ENCODE measurements at regions of chr4 and their contacts with region 1.

Region 1: DNA sequence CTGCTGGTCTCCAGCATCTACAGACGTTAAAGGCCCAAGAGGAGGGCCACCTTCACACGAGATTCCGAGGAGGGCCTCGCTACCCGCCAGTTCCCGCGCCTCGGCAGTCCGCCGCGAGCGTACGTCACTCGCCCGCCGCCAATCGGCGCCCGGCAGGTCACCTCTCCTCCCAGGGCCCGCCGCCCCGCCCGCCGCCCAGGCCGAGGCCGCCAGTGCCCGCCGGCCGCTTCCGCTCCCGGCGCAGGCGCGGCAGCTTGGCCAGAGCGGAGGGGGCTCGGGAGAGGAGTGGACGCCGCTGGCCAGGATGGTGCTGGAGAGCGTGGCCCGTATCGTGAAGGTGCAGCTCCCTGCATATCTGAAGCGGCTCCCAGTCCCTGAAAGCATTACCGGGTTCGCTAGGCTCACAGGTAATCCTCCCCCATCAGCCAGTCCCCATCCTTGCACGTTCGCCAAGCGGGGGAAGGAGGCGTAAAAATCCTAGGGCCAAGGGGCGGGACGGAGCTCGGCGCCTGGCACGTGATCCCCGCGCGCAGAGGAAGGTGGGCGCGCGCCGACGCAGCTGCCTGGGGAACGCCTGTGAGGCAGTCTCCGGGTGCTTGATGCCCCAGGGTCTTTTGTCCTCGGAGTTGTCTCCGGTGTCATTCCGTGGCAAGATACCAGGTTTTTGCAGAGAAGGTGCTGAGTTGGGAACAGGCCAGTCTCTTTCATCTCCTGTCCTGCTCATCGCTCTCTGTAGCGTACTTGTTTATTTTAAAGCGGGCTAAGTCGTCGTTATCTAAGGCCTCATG is at the start of gene CISD2:
- DNase-seq: peak; percentile 96
- ATAC-seq: peak; percentile 88
- H3K4me3 Mint-ChIP-seq: peak within 1 kb of the TSS; percentile 95
- H3K27ac Mint-ChIP-seq: peak within 1 kb of the TSS; percentile 99
- H3K4me1 Mint-ChIP-seq: peaks cover 53% of the 10 kb centered on the region
- H3K27me3 Mint-ChIP-seq: no peaks in the 10 kb centered on the region
- total RNA-seq, gene CISD2: 33.5 to 35.1 TPM

Region 2: DNA sequence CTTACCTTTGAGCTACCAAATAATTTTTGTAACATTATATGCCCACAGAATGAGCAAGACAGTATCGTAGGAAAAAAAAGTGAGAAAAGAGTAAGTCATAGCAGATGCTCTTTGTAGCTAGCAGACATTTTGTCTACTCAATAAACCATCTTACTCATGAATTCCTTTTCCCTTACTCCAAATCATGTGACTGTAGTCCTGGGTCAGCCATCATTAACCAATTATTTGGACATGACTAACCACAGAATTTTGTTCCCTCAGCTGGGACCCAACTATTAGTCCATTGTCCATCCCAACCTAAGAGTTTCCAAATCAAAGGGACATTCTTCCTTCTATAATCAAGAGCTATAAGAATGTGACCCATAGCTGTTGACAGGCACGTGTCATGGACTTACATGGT is 53.0 kb before region 1 on chr4:
- CTCF ChIA-PET with region 1: interaction called, 6 read pairs
- POLR2A ChIA-PET with region 1: interaction called, 13 read pairs
- intact Hi-C with region 1: no loop called
- DNase-seq: no peak
- ATAC-seq: peak; percentile 21
- H3K4me3 Mint-ChIP-seq: no peak overlapping the region
- H3K27ac Mint-ChIP-seq: peak overlapping the region; percentile 83
- H3K4me1 Mint-ChIP-seq: peaks cover 89% of the 10 kb centered on the region
- H3K27me3 Mint-ChIP-seq: no peaks in the 10 kb centered on the region

Region 3: DNA sequence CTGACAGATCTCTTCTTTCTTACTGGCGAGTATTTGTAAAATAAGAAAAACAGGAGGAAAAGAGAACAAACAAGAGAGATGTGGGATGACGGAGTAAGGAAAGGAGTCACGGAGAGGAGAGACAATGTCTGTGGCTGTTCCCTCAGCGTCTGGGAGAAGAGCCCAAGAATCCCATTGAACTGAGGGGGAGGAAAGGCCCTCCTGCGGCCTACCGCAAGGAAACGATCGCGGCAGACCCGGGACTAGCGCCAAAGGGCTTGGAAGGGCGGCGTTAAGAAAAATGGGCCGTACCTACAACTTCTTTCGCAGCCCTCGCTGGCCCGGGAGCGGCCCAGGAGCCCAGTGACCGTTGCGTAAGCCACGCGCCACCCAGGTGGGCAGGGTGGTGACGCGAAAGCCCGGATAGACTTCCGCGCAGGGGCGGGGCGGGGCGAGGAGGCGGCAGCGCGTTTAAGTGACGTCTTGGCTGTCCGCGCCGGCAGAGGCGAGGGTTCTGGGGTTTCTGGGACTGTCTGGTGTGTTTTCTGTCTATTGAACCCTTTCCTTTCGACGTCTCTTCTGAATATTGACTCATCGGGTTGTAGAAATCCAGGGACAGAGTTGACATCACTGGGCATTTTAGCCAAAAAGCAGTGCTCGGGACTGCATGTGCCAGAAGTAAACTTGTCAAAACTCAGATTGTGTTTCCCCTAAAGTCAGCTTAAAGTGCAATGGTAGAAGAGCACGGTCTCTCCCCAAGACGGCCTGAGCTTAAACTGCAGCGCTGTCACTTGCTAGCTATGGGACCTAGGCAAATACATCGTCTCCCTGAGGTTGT is 150.5 kb after region 1 on chr4 and contains the start of gene SLC9B1:
- CTCF ChIA-PET with region 1: interaction called, 3 read pairs
- POLR2A ChIA-PET with region 1: no interaction called
- intact Hi-C with region 1: loop called (anchors 1 to 2 kb)
- DNase-seq: peak; percentile 97
- ATAC-seq: peak; percentile 98
- H3K4me3 Mint-ChIP-seq: peak within 1 kb of the TSS; percentile 86
- H3K27ac Mint-ChIP-seq: peak within 1 kb of the TSS; percentile 97
- H3K4me1 Mint-ChIP-seq: peaks cover 19% of the 10 kb centered on the region
- H3K27me3 Mint-ChIP-seq: no peaks in the 10 kb centered on the region
- total RNA-seq, gene SLC9B1: 1.8 to 3.7 TPM

Region 4: GRCh38 chr4:103075901-103076739 is 207.1 kb after region 1 on chr4:
- CTCF ChIA-PET with region 1: no interaction called
- POLR2A ChIA-PET with region 1: no interaction called
- intact Hi-C with region 1: loop called (anchors 1 to 5 kb)
- DNase-seq: peak; percentile 79
- ATAC-seq: peak; percentile 63
- H3K4me3 Mint-ChIP-seq: peak overlapping the region; percentile 84
- H3K27ac Mint-ChIP-seq: peak overlapping the region; percentile 99
- H3K4me1 Mint-ChIP-seq: peaks cover 45% of the 10 kb centered on the region
- H3K27me3 Mint-ChIP-seq: no peaks in the 10 kb centered on the region

Region 5: GRCh38 chr4:103198111-103198765 is 329.3 kb after region 1 on chr4 and contains the start of gene CENPE:
- CTCF ChIA-PET with region 1: no interaction called
- POLR2A ChIA-PET with region 1: no interaction called
- intact Hi-C with region 1: loop called in 1 of 2 experiments (anchors 2 kb)
- DNase-seq: peak; percentile 91
- ATAC-seq: peak; percentile 88
- H3K4me3 Mint-ChIP-seq: peak within 1 kb of the TSS; percentile 92
- H3K27ac Mint-ChIP-seq: peak within 1 kb of the TSS; percentile 92
- H3K4me1 Mint-ChIP-seq: peaks cover 8% of the 10 kb centered on the region
- H3K27me3 Mint-ChIP-seq: peaks cover 7% of the 10 kb centered on the region
- total RNA-seq, gene CENPE: 42.4 to 54.0 TPM